HepG2 (cell line): ENCODE measurements at regions of chr22 and their contacts with region 1.

Region 1: DNA sequence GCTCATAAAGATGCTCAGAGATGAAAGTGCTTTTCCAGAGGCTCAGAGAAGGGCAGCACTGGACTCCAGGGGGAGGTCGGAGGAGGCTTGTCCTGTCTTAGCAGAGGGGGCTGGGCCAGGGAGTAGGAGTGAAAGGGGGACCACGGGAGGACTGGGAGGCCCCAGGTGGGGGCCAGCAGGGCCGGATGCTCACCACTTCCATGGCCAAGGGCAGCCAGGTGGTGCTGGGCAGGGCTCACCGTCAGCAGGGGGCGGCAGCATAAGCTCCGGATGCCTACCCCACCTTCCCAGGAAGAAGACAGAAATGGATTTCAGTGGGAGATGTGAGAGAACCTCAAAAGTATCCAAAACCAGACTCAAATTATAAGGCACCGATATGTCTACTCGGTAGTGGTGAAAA is 11.0 kb downstream of the RAB36 start:
- DNase-seq: no peak
- ATAC-seq: peak; percentile 40
- H3K4me3 ChIP-seq: peak overlapping the region in 1 of 3 experiments; percentile 71; a peak in 2 of 6 replicates
- H3K27ac ChIP-seq: no peak overlapping the region
- H3K4me1 ChIP-seq: peaks cover 100% of the 10 kb centered on the region
- H3K27me3 ChIP-seq: no peaks in the 10 kb centered on the region; a peak in 1 of 5 replicates
- CTCF ChIP-seq: peak; percentile 65
- EP300 ChIP-seq: no peak
- POLR2A ChIP-seq: no peak
- RAD21 ChIP-seq: no peak

Region 2: DNA sequence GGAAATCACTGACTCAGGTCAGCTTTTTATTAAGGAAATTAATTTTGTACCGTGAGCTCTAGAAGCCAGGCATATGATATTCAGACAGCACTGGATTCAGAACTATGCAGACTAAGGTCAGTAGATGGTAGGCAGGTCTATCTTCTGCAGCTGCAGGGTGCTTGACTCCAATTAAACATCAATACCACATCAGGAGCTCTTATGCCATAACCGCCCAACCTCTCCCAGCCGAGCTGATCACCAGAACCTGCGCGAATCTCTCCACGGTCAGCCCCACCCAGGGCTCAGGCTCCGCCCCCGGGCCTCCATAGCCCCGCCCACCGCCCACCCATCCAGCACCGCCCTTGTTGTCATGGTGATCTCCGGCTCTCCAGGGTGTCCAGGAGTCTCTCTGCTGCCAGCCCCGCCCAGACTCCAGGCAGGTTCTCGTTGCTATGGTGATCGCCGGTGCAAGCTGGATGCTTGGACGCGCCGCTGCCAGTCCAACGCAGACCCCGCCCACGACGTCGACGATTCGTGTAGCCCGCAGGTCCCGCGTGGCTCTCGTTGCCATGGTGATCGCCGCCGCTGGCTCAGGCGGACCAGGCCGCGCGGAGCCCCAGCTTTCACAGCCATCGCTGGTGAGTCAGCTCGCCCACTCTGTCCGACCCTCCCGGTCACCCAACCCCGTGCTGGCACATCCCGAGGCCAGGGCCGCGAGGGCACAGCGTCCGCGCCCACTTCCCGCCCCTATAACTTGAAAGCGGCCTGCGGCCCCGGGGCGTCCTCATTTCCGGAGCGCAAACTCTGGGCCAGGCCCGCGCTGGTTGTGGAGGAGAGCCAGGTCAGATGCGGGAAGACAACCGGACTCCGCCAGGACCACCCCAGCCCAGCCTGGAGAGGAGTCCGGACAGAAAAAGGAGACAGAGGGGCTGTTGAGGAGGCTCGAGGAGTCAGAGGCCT is 11.1 kb before region 1 on chr22 and contains the start of gene RAB36:
- CTCF ChIA-PET with region 1: no interaction called
- POLR2A ChIA-PET with region 1: interaction called, 12 read pairs
- in situ Hi-C with region 1: no loop called
- intact Hi-C with region 1: no loop called
- DNase-seq: peak; percentile 98
- ATAC-seq: peak; percentile 73
- H3K4me3 ChIP-seq: peak within 1 kb of the TSS; percentile 11 to 48 (median 23); a peak in 3 of 6 replicates
- H3K27ac ChIP-seq: no peak within 1 kb of the TSS
- H3K4me1 ChIP-seq: peaks cover 91% of the 10 kb centered on the region
- H3K27me3 ChIP-seq: no peaks in the 10 kb centered on the region
- CTCF ChIP-seq: no peak
- EP300 ChIP-seq: no peak
- POLR2A ChIP-seq: peak; percentile 38 to 44; a peak in 3 of 4 replicates
- RAD21 ChIP-seq: 0 out of 2 replicates have a peak, but pooled peaks have one; percentile 18
- total RNA-seq, gene RAB36: 0.20 and 0.24 TPM in 2 replicates